ENCODE measurements at regions of chr5 and their contacts with region 1.

Region 1: GRCh38 chr5:94577466-94578245 is 40.7 kb downstream of the KIAA0825 start:
- DNase-seq: no peak
- H3K4me3 Mint-ChIP-seq: no peak overlapping the region
- H3K27ac Mint-ChIP-seq: peak overlapping the region; percentile 25
- H3K4me1 Mint-ChIP-seq: peaks cover 42% of the 10 kb centered on the region
- H3K27me3 Mint-ChIP-seq: no peaks in the 10 kb centered on the region

Region 2: GRCh38 chr5:94389515-94389899 is 188.1 kb before region 1 on chr5:
- CTCF ChIA-PET with region 1: no interaction called
- POLR2A ChIA-PET with region 1: no interaction called
- intact Hi-C with region 1: loop called (anchors 5 kb)
- DNase-seq: no peak
- H3K4me3 Mint-ChIP-seq: no peak overlapping the region
- H3K27ac Mint-ChIP-seq: no peak overlapping the region
- H3K4me1 Mint-ChIP-seq: peaks cover 7% of the 10 kb centered on the region
- H3K27me3 Mint-ChIP-seq: no peaks in the 10 kb centered on the region

Region 3: DNA sequence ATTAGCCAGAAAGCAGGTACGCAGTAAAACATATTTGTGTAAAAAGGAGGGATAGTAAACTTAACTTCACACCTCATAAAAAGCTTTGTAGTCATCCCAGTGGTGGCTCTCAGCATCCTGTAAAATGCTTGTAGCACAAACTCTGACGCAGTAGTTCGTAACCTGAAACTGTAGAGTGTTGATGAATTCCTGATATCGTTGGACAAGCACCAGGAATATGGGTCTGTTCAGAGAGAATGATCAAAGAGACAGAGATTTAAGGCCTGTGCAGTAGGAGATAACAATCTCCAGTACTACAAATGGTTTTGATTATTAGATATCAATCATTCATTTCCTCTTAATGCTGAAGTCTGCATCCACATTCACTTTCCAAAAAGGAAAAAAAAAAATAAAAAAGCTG is 107.8 kb before region 1 on chr5:
- CTCF ChIA-PET with region 1: no interaction called
- POLR2A ChIA-PET with region 1: no interaction called
- intact Hi-C with region 1: no loop called
- DNase-seq: no peak
- H3K4me3 Mint-ChIP-seq: no peak overlapping the region
- H3K27ac Mint-ChIP-seq: no peak overlapping the region
- H3K4me1 Mint-ChIP-seq: no peaks in the 10 kb centered on the region
- H3K27me3 Mint-ChIP-seq: no peaks in the 10 kb centered on the region

Region 4: GRCh38 chr5:94849821-94850736 is 272.4 kb after region 1 on chr5:
- CTCF ChIA-PET with region 1: no interaction called
- POLR2A ChIA-PET with region 1: no interaction called
- intact Hi-C with region 1: no loop called
- DNase-seq: peak; percentile 17
- H3K4me3 Mint-ChIP-seq: no peak overlapping the region
- H3K27ac Mint-ChIP-seq: no peak overlapping the region
- H3K4me1 Mint-ChIP-seq: peaks cover 7% of the 10 kb centered on the region
- H3K27me3 Mint-ChIP-seq: peaks cover 1% of the 10 kb centered on the region

Measured in activated CD4-positive, alpha-beta memory T cell treated with anti-CD3 and anti-CD28 coated beads for 36 hours (primary cell).